ENCODE measurements at regions of chr22 and their contacts with region 1.

Region 1: DNA sequence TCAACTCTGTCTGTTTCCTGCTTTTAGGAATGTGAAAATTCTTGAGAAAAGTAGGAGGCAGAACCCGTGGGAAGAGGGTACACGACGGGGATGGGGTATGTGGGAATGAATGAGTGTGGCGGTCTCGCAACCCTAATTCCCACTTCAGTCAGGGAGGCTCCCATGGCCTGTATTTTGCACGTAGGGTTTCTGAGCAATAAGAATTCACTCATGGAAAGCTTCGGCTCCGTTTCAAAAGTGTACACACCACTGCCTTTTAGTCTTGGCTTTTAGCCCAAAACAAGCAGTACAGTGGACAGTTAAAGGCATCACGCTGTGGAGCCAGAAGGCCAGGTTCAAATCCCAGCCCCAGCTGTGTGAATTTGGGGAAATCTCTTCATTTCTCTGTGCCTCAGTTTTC is 116.7 kb downstream of the MN1 start:
- DNase-seq: no peak
- ATAC-seq: no peak

Region 2: GRCh38 chr22:27531782-27532530 is 152.9 kb before region 1 on chr22:
- intact Hi-C with region 1: no loop called
- DNase-seq: no peak
- ATAC-seq: peak; percentile 68

Region 3: GRCh38 chr22:27632451-27633295 is 52.2 kb before region 1 on chr22:
- intact Hi-C with region 1: loop called (anchors 1 kb)
- DNase-seq: peak; percentile 79
- ATAC-seq: peak; percentile 80

Region 4: DNA sequence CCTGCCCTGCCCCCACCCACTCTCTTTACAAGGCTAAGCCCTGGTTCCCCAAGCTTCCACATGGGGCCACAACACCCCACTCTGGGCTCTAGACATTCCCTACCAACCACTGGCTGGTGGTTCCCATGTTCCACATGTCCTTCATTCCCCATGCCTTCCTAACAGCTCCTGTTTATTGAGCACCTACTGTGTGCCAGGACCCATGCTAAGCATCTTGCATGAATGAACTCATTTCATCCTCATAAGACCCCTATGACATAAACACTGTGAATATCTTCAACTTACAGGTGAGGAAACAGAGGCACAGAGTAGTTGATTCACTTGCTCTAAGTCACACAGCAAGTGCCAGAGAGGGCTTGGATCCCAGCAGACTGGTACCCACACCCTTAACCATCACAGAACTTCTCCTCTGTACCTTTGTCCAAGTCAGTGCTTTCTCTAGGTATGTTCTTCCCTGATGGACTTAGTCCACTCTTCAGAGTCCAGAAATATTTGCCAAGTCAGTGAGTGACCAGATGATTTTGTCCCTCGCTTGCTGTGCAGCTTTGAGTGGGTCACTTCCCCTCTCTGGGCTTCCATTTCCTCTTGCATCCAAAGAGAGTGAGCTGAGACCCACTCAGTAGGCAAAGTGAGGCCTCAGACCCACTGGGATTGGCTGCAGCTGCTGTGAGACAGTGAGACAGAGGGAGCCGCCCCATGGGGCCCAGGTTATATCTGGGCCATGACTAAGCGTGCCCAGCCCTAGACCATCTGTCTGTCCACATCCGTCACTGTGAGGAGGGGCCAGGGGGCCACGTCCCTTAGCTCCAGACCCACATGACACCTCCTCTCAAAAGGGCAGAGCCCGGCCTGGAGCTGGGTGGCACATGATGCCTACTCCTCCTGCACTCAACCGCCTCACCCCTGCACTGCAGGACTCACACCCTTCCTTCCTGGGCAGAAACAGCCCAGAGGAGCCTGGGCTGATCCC is 15.8 kb before region 1 on chr22:
- intact Hi-C with region 1: loop called (anchors 2 kb)
- DNase-seq: peak; percentile 88
- ATAC-seq: peak; percentile 88